Left ventricle myocardium superior (tissue), 1 donor: ENCODE measurements at regions of chr15 and their contacts with region 1.

Region 1: GRCh38 chr15:71747128-71748083 is 62.9 kb upstream of the NR2E3 start:
- DNase-seq: no peak
- ATAC-seq: no peak

Region 2: GRCh38 chr15:71804695-71805470 is 57.5 kb after region 1 on chr15:
- intact Hi-C with region 1: loop called (anchors 2 kb)
- DNase-seq: no peak
- ATAC-seq: peak; percentile 5

Region 3: DNA sequence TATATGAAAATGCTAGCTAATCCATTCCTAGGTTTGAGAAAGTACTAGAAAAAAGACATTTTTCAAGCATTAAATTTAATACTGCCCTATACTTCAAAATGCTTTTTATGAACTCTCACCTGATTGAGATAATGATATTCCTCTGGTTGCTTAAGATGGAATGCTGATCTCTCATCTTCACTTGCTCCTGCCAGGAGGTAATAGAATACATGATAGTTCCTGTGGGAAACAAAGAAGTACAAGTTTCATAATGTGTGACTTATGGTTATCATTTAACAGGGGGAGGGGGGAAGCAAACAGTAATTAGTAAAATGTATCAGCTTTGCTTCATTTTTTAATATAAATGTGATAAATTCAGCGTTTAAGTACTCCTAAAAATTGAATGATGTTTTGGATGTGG is 273.4 kb after region 1 on chr15:
- intact Hi-C with region 1: no loop called
- DNase-seq: no peak
- ATAC-seq: no peak